ENCODE measurements at regions of chr3 and their contacts with region 1.

Region 1: GRCh38 chr3:184017672-184018423 is at the start of gene ABCC5:
- DNase-seq: peak; percentile 92 to 99 (median 95)

Region 2: DNA sequence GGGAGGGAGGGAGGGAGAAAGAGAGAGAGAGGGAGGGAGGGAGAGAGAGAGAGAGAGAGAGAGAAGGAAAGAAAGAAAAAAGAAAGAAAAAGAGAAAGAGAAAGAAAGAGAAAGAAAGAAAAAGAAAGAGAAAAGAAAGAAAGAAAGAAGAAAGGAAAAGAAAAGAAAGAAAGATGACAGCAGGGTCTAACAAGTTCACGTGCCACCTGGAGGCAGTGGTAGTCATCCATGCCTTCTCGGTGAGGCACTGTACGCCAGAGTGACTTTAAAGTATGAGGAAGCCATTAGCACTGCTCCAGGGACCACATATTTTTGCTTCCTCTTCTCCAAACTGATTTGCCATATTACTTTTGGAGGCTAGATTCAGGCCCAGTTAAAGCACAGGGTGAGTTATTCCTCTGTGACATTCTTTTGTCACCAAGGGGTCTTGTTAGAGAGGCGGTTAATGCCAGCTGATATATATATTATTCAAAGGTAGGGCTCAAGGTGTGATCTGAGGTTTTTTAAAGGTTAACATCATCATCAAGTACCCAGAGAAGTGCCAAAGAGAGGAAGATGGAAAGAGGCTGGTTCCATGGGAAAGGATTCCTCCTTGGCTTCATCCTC is 13.4 kb after region 1 on chr3 and contains the start of gene HTR3D:
- intact Hi-C with region 1: no loop called
- DNase-seq: no peak

Region 3: DNA sequence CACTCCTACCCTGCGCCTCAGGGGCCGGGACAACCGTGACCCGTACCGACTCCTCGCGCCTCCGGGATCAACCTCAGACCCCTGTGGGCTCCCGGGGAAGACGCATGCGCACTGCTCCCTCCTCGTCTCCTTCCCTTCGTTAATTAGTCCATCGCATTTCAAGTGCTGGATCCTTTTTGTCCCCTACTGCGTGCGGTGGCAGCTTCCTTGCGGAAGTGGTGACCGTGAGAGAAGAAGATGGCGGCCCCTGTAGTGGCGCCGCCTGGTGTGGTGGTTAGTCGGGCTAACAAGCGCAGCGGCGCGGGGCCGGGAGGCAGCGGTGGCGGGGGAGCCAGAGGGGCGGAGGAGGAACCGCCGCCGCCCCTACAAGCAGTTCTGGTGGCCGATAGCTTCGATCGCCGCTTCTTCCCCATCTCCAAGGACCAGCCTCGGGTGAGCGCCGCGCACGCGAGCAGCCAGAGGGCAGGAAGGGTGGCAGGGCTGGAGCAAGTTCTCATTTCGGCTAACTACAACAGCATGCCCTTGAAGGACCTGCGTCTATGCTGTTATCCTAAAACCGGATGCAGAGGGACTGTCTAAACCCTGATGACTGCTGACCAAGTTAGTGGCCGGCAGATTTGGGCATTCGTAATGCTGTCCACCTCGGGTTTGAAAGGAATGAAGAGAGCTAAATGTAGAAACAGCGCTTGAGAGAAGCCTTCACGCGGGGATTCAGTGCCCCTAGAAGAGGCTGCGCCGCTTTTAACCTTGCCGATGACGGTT is 117.5 kb after region 1 on chr3 and contains the start of gene EIF2B5:
- intact Hi-C with region 1: loop called (anchors 5 kb)
- DNase-seq: peak; percentile 91 to 99 (median 94)